ENCODE measurements at regions of chr4 and their contacts with region 1.

Region 1: DNA sequence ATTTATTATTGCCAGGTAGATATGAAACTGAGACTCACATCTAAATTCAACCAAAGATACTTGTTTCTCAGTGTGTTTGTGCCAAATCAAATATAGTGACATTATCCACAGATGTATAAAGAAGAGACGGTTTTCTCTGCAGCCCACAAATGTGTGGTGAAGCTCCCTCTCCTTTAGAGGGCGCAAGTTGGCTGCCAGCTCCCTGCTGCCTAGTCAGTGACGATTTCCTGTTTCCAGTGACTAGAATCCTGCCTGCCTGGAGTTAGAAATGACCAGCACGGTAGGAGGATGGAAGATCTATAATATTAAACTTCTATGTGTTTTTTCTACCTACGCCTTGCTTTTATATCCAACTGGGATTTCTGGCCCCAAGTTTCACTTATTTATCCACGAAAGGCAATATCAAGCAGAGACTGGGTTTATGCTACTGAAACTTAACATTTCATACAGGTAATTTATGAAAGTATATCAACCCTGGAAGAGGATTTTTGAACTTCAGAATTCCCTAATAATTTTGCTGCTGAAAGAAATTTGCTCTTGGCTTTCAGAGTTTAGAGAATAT is 1793.7 kb upstream of the TENM3 start:
- DNase-seq: peak in 1 of 2 experiments; percentile 7
- H3K4me3 ChIP-seq: no peak overlapping the region; a peak in 1 of 8 replicates
- H3K27ac ChIP-seq: no peak overlapping the region
- H3K4me1 ChIP-seq: no peaks in the 10 kb centered on the region
- H3K27me3 ChIP-seq: no peaks in the 10 kb centered on the region
- CTCF ChIP-seq: peak; percentile 76 to 90 (median 82)
- EP300 ChIP-seq: no peak
- POLR2A ChIP-seq: no peak
- RAD21 ChIP-seq: peak; percentile 88 to 91

Region 2: GRCh38 chr4:180587379-180587778 is 137.9 kb after region 1 on chr4:
- CTCF ChIA-PET with region 1: interaction called, 12 read pairs
- POLR2A ChIA-PET with region 1: no interaction called
- DNase-seq: no peak
- H3K4me3 ChIP-seq: no peak overlapping the region
- H3K27ac ChIP-seq: no peak overlapping the region
- H3K4me1 ChIP-seq: peaks cover 0 to 3% (median under 1%) of the 10 kb centered on the region in 4 experiments; a peak in 2 of 7 replicates
- H3K27me3 ChIP-seq: no peaks in the 10 kb centered on the region
- CTCF ChIP-seq: peak in 2 of 3 experiments; percentile 38 to 40; a peak in 2 of 4 replicates
- EP300 ChIP-seq: no peak
- POLR2A ChIP-seq: no peak
- RAD21 ChIP-seq: peak; percentile 27 to 46; a peak in 3 of 4 replicates

Region 3: DNA sequence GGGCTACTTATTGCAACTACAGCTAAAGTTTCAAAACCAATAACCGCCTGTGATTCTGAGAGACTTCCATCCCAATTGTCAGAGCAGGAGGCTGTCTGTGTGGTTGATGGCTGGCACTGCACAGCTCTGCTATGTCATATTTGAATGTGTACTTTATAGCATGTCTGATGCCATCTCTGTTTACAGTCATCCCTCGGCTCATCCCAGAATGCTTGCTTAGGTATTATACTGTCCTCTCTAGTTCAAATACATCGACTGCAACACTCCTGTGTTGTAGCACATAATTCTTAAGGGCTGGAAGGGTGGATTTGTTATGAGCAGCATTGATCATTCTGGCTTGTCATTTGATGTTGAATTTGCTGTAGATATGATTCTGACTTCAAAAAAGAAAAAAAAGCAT is 176.2 kb after region 1 on chr4:
- CTCF ChIA-PET with region 1: no interaction called
- POLR2A ChIA-PET with region 1: no interaction called
- DNase-seq: no peak
- H3K4me3 ChIP-seq: no peak overlapping the region
- H3K27ac ChIP-seq: no peak overlapping the region
- H3K4me1 ChIP-seq: no peaks in the 10 kb centered on the region
- H3K27me3 ChIP-seq: no peaks in the 10 kb centered on the region
- CTCF ChIP-seq: no peak
- EP300 ChIP-seq: no peak
- POLR2A ChIP-seq: no peak
- RAD21 ChIP-seq: no peak

Measured in H1 (cell line).